ENCODE measurements at regions of chr2 and their contacts with region 1.

Region 1: GRCh38 chr2:70142590-70143313 is 48.1 kb downstream of the C2orf42 start:
- DNase-seq: peak; percentile 99 to 100 (median 100)
- ATAC-seq: peak; percentile 85
- H3K4me3 ChIP-seq: peak overlapping the region; percentile 81
- H3K4me3 Mint-ChIP-seq: peak overlapping the region; percentile 83 to 96 (median 91)
- H3K27ac ChIP-seq: peak overlapping the region; percentile 97
- H3K27ac Mint-ChIP-seq: peak overlapping the region; percentile 97 to 99 (median 97)
- H3K4me1 ChIP-seq: peaks cover 27 to 39% of the 10 kb centered on the region in 2 donors
- H3K4me1 Mint-ChIP-seq: peaks cover 37 to 69% (median 55%) of the 10 kb centered on the region in 7 donors
- H3K27me3 ChIP-seq: no peaks in the 10 kb centered on the region
- H3K27me3 Mint-ChIP-seq: peaks cover 0 to 2% (median 0%) of the 10 kb centered on the region in 5 donors

Region 2: DNA sequence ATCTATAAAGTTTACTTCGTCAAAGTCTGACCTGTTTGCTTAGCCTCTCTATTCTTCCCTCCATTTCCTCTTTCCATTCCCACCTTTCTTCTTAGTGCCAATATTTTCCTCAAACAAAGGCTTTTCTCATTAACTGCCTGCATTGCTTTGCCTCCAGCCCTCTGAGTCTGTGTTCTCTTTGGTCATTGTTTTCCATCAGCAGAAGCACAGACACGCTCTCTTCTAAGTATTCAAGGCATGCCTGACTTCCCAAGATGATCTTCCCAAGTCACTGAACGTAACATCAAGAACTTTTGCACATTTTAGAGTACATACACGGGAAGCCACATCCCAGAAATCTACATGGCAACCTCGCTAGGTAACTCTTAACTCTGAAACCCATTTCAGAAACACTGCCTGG is 433.5 kb before region 1 on chr2:
- CTCF ChIA-PET with region 1: no interaction called
- POLR2A ChIA-PET with region 1: no interaction called
- intact Hi-C with region 1: no loop called
- DNase-seq: no peak
- ATAC-seq: no peak
- H3K4me3 ChIP-seq: no peak overlapping the region
- H3K4me3 Mint-ChIP-seq: no peak overlapping the region
- H3K27ac ChIP-seq: no peak overlapping the region
- H3K27ac Mint-ChIP-seq: no peak overlapping the region
- H3K4me1 ChIP-seq: peaks cover under 1 to 2% of the 10 kb centered on the region in 2 donors
- H3K4me1 Mint-ChIP-seq: peaks cover 5 to 50% (median 23%) of the 10 kb centered on the region in 7 donors
- H3K27me3 ChIP-seq: no peaks in the 10 kb centered on the region
- H3K27me3 Mint-ChIP-seq: no peaks in the 10 kb centered on the region

Region 3: DNA sequence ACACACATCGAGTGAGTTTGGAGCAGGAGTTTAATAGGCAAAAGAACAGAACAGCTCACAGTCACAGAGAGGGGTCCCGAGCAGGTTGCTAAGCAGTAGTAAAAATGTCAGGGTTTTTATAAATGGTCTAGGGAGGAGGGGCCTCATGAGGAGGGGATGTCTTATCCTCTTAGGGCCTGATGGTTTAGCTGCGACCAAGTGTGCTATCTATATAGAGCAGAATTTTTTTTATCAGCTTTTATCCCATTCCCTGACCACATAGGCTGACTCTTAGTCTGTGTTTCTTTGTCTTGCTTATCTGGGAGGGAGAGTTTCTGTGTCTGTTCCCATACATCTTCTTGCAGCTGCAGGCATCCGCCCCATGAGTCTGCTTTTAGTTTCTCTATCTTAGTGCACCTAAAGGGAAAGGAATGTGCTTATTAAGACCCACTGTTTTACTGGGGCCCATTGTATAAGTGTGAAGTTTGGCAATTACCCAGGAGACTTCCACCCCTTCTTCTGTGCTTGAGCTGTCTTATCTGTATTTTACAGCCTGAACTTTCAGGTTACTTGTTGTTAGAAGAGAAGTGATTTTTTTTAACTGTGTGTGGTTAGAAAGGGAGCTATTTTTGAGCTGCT is 343.7 kb before region 1 on chr2:
- CTCF ChIA-PET with region 1: no interaction called
- POLR2A ChIA-PET with region 1: no interaction called
- intact Hi-C with region 1: no loop called
- DNase-seq: peak in 1 of 9 donors; percentile 5
- ATAC-seq: peak; percentile 16
- H3K4me3 ChIP-seq: no peak overlapping the region
- H3K4me3 Mint-ChIP-seq: peak overlapping the region in 8 of 10 donors; percentile 3 to 70 (median 46)
- H3K27ac ChIP-seq: no peak overlapping the region
- H3K27ac Mint-ChIP-seq: peak overlapping the region in 4 of 9 donors; percentile 10 to 86 (median 22)
- H3K4me1 ChIP-seq: no peaks in the 10 kb centered on the region
- H3K4me1 Mint-ChIP-seq: peaks cover 6 to 40% (median 31%) of the 10 kb centered on the region in 7 donors
- H3K27me3 ChIP-seq: no peaks in the 10 kb centered on the region
- H3K27me3 Mint-ChIP-seq: peaks cover 0 to 5% (median 0%) of the 10 kb centered on the region in 5 donors

Region 4: GRCh38 chr2:70070541-70071268 is 72.0 kb before region 1 on chr2:
- CTCF ChIA-PET with region 1: interaction called, 11 read pairs
- POLR2A ChIA-PET with region 1: interaction called, 1,973 read pairs
- intact Hi-C with region 1: loop called (anchors 1 kb)
- DNase-seq: peak in 8 of 9 donors; percentile 49 to 80 (median 70)
- ATAC-seq: peak; percentile 85
- H3K4me3 ChIP-seq: peak overlapping the region; percentile 48
- H3K4me3 Mint-ChIP-seq: peak overlapping the region; percentile 56 to 91 (median 80)
- H3K27ac ChIP-seq: peak overlapping the region; percentile 71
- H3K27ac Mint-ChIP-seq: peak overlapping the region; percentile 89 to 99 (median 95)
- H3K4me1 ChIP-seq: peaks cover 35 to 36% of the 10 kb centered on the region in 2 donors
- H3K4me1 Mint-ChIP-seq: peaks cover 19 to 72% (median 63%) of the 10 kb centered on the region in 7 donors
- H3K27me3 ChIP-seq: no peaks in the 10 kb centered on the region
- H3K27me3 Mint-ChIP-seq: no peaks in the 10 kb centered on the region

Region 5: GRCh38 chr2:70104231-70105111 is 38.3 kb before region 1 on chr2:
- CTCF ChIA-PET with region 1: interaction called, 6 read pairs
- POLR2A ChIA-PET with region 1: interaction called, 194 read pairs
- intact Hi-C with region 1: loop called in 1 of 2 experiments (anchors 1 kb)
- DNase-seq: peak in 4 of 9 donors; percentile 35 to 47 (median 46)
- ATAC-seq: no peak
- H3K4me3 ChIP-seq: peak overlapping the region; percentile 35
- H3K4me3 Mint-ChIP-seq: peak overlapping the region; percentile 60 to 87 (median 82)
- H3K27ac ChIP-seq: peak overlapping the region; percentile 72
- H3K27ac Mint-ChIP-seq: peak overlapping the region; percentile 88 to 97 (median 93)
- H3K4me1 ChIP-seq: peaks cover 37 to 45% of the 10 kb centered on the region in 2 donors
- H3K4me1 Mint-ChIP-seq: peaks cover 34 to 58% (median 55%) of the 10 kb centered on the region in 7 donors
- H3K27me3 ChIP-seq: no peaks in the 10 kb centered on the region
- H3K27me3 Mint-ChIP-seq: no peaks in the 10 kb centered on the region

Region 6: DNA sequence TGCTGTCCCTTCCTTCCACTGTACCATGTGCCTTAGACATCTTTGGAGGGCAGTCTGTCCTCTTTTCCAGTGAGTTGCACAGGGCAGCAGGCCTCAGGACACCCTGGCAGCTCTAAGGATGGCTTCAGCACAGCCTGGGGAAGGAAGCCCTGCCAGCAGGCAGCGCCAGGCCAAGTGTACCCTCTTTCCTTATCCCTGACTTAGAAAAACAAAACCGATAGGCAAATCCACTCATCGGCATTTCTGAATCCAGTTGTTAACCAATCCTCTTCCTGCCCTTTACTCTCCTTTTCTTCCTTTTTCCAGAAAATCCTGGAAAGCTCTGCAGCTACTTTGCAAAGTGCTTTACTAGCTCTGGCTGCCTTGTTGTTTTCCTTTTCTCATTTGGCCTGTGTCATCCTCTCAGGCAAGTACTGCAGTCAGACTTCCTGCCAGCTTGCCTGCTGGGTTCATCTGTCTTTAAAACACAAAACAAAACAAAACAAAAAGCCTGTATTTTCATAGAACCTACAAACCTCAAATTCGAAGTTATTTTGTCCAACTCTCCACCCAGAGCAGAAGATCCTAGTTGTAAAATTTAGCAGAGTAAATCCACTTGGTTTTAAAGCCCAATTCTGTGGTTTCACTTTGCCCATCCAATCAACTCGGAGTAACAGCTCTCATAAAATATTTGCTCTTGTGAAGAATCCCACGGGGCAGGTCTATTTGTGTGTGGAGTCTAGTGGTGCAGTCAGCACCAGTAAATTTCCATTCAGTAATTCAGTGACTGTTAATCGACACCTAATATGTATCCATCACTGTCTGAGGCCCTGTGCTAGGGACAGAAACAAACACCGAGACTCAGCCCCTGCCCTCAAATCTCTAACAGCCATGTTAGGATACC is 10.3 kb before region 1 on chr2:
- CTCF ChIA-PET with region 1: interaction called, 11 read pairs
- POLR2A ChIA-PET with region 1: interaction called, 570 read pairs
- intact Hi-C with region 1: loop called in 1 of 2 experiments (anchors 1 kb)
- DNase-seq: peak in 7 of 9 donors; percentile 63 to 77 (median 68)
- ATAC-seq: peak; percentile 66
- H3K4me3 ChIP-seq: peak overlapping the region; percentile 53
- H3K4me3 Mint-ChIP-seq: peak overlapping the region; percentile 81 to 94 (median 90)
- H3K27ac ChIP-seq: peak overlapping the region; percentile 85
- H3K27ac Mint-ChIP-seq: peak overlapping the region; percentile 95 to 99 (median 97)
- H3K4me1 ChIP-seq: peaks cover 66 to 74% of the 10 kb centered on the region in 2 donors
- H3K4me1 Mint-ChIP-seq: peaks cover 58 to 88% (median 79%) of the 10 kb centered on the region in 7 donors
- H3K27me3 ChIP-seq: no peaks in the 10 kb centered on the region
- H3K27me3 Mint-ChIP-seq: no peaks in the 10 kb centered on the region

Region 7: DNA sequence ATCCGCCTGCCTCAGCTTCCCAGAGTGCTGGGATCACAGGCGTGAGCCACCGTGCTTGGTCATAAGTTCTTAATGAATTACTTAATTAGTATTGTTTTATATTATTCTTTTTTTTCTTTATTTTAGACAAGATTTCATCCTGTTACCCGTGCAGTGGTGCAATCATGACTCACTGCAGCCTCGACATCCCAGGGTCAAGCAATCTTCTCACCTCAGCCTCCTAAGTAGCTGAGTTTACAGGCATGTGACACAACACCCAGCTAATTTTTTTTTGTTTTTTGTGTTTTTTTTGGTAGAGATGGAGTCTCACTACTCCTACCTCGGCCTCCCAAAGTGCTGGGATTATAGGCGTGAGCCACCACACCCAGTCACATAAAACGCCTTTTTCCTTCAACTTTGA is 30.8 kb after region 1 on chr2:
- CTCF ChIA-PET with region 1: no interaction called
- POLR2A ChIA-PET with region 1: no interaction called
- intact Hi-C with region 1: no loop called
- DNase-seq: no peak
- ATAC-seq: no peak
- H3K4me3 ChIP-seq: no peak overlapping the region
- H3K4me3 Mint-ChIP-seq: no peak overlapping the region
- H3K27ac ChIP-seq: no peak overlapping the region
- H3K27ac Mint-ChIP-seq: no peak overlapping the region
- H3K4me1 ChIP-seq: no peaks in the 10 kb centered on the region
- H3K4me1 Mint-ChIP-seq: no peaks in the 10 kb centered on the region
- H3K27me3 ChIP-seq: no peaks in the 10 kb centered on the region
- H3K27me3 Mint-ChIP-seq: no peaks in the 10 kb centered on the region

Region 8: GRCh38 chr2:70248181-70248847 is 105.6 kb after region 1 on chr2 and contains the start of gene TIA1:
- CTCF ChIA-PET with region 1: no interaction called
- POLR2A ChIA-PET with region 1: interaction called, 3 read pairs
- intact Hi-C with region 1: loop called (anchors 1 kb)
- DNase-seq: peak; percentile 94 to 99 (median 98)
- ATAC-seq: peak; percentile 98
- H3K4me3 ChIP-seq: peak within 1 kb of the TSS; percentile 87
- H3K4me3 Mint-ChIP-seq: peak within 1 kb of the TSS; percentile 83 to 99 (median 95)
- H3K27ac ChIP-seq: peak within 1 kb of the TSS; percentile 95
- H3K27ac Mint-ChIP-seq: peak within 1 kb of the TSS; percentile 91 to 100 (median 97)
- H3K4me1 ChIP-seq: peaks cover 13 to 24% of the 10 kb centered on the region in 2 donors
- H3K4me1 Mint-ChIP-seq: peaks cover 23 to 48% (median 40%) of the 10 kb centered on the region in 7 donors
- H3K27me3 ChIP-seq: no peaks in the 10 kb centered on the region
- H3K27me3 Mint-ChIP-seq: peaks cover 0 to 4% (median 0%) of the 10 kb centered on the region in 5 donors
- total RNA-seq, gene TIA1: 80.9 to 244 (median 163) TPM

Region 9: GRCh38 chr2:71068218-71069035 is 925.7 kb after region 1 on chr2 and contains the start of gene NAGK:
- CTCF ChIA-PET with region 1: no interaction called
- POLR2A ChIA-PET with region 1: no interaction called
- intact Hi-C with region 1: no loop called
- DNase-seq: peak; percentile 97 to 99 (median 99)
- ATAC-seq: peak; percentile 86
- H3K4me3 ChIP-seq: peak within 1 kb of the TSS; percentile 81
- H3K4me3 Mint-ChIP-seq: peak within 1 kb of the TSS; percentile 89 to 100 (median 98)
- H3K27ac ChIP-seq: peak within 1 kb of the TSS; percentile 96
- H3K27ac Mint-ChIP-seq: peak within 1 kb of the TSS; percentile 97 to 100 (median 99)
- H3K4me1 ChIP-seq: peaks cover 39 to 50% of the 10 kb centered on the region in 2 donors
- H3K4me1 Mint-ChIP-seq: peaks cover 40 to 68% (median 57%) of the 10 kb centered on the region in 7 donors
- H3K27me3 ChIP-seq: no peaks in the 10 kb centered on the region
- H3K27me3 Mint-ChIP-seq: peaks cover 0 to 7% (median 0%) of the 10 kb centered on the region in 5 donors
- total RNA-seq, gene NAGK: 92.4 to 169 (median 127) TPM

Measured in naive thymus-derived CD4-positive, alpha-beta T cell (primary cell).